Dorsolateral prefrontal cortex (tissue), 120 donors: ENCODE measurements at regions of chr20 and their contacts with region 1.

Region 1: DNA sequence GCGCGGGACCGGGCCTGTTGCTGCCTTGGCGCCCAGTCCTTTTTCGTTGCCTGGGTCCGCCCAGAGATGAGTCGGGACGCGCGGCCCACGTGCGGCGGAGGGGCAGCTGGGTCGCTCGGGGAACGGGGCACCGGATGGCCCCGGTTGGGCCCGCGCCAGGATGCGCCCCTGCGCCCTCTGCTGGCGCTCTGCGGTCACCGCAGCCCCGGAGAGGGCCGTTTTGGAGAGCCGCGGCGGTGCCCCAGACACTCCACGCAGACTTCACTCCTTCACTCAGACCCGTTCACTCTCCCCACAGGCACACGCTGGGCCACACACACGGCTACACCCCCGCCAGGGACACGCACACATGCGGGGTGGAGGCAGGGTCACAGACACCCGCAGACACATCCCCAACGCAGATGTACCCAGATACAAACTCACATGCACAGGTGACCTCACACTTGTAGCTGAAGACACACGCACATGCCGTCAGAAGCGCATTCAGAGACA is 38.8 kb downstream of the SRC start:
- DNase-seq: peak in 6 of 10 donors; percentile 36 to 83 (median 60)
- H3K4me3 ChIP-seq: peak overlapping the region in 58 of 59 donors; percentile 19 to 66 (median 51)
- H3K27ac ChIP-seq: peak overlapping the region in 9 of 59 donors; percentile 1 to 68 (median 43)
- H3K27me3 ChIP-seq: no peaks in the 10 kb centered on the region
- CTCF ChIP-seq: peak; percentile 69 to 96 (median 88)

Region 2: DNA sequence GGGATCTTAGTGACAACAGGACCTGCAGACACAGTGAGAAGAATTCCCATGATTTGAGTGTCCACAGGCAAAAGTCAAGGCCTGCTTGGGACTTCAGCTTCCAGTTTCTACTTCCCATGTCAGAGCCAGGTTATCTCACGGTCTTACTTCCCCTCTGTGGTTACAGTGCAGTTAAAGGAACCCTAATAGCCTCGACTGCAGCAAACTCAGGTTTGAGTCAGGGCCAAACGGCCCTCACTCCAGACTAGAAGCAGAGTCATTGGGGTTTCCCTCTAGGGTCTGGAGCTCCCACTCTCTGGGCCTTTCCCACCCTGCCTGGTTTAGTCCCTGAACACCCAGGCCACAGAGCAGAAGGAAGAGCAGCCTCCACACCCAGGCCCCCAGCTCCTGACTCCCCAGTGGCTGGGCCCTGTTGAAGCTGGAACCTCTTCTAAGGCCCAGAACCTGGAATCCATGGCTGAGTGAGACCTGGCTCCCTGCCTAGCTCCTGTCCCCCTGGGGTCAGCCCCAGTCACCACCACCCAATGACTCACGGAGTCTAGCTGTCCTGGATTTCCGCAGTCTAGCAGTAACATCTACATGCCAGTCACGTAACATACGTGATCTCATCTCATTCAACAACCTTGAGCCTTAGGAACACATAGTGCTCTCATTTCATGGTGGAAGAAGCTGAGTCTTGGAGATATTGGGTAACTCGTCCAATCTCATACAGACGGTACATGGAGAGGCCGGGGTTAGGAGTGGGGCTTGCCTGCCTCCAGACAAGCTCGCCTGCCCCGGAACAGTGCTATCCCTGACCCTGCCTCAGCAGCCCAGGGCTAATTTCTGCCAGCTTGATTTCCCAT is 113.9 kb before region 1 on chr20:
- intact Hi-C with region 1: loop called (anchors 2 to 5 kb)
- DNase-seq: no peak
- H3K4me3 ChIP-seq: no peak overlapping the region
- H3K27ac ChIP-seq: peak overlapping the region in 5 of 59 donors; percentile 13 to 44 (median 20)
- H3K27me3 ChIP-seq: no peaks in the 10 kb centered on the region
- CTCF ChIP-seq: no peak

Region 3: DNA sequence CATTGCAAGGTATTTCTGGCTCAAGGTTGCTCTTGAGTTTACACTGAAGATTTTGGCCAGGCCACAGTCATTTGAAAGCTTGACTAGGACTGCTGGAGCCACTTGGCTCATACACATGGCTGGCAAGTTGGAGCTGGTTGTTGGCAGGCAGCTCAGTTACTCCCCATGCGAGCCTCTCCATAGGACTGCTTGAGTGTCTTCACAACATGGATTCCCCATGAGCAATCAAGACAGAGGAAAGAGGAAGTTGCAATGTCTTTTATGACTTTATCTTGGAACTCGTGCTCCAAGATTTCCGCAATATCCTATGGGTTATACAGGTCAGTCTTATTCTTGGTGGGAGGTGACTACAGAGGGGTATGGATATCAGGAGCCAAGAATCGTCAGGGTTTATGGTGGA is 96.6 kb before region 1 on chr20:
- intact Hi-C with region 1: loop called in 1 of 2 experiments (anchors 5 kb)
- DNase-seq: no peak
- H3K4me3 ChIP-seq: no peak overlapping the region
- H3K27ac ChIP-seq: no peak overlapping the region
- H3K27me3 ChIP-seq: no peaks in the 10 kb centered on the region
- CTCF ChIP-seq: no peak